HepG2 (cell line): ENCODE measurements at regions of chr1 and their contacts with region 1.

Region 1: DNA sequence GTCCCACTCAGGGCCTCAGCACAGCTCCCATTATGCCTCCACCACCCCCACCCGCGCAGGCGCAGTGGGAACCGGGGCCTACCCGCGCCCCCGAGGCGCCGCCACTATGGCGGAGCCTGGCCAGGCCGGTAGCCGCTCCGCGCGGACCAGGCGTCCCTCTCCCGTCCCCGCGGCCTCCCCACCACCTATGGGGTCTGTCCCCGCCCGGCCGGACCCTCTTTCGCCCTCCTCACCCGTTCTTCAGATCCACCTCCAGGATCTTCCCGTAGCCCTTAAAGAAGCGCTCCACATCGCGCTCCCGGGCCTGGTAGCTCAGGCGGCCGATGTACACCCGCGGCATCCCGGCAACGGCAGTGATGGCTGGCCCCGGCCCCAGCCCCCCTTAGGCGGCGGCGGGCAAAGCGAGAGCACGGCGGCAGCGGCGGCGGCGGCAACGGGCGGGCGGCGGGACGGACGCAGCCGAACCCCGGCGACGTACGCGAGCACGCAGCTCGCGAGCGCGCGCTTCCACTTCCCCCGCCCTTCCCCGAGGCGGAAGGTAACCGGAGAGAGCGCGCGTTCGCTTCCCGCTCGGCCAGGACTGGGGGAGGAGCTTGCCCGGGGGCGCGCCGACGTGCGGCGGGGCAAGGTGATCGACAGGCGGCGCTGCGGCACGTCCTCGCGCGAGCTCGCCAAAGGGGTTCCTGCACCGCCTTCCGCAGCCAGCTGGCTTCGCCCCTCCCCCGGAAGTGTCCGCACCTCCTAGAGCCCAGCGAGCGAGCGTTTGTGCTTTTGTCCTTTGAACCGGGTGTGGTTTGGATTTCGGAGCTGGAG is at the start of gene SRSF4:
- DNase-seq: peak; percentile 97
- ATAC-seq: peak; percentile 87
- H3K4me3 ChIP-seq: peak within 1 kb of the TSS; percentile 90 to 99 (median 98)
- H3K27ac ChIP-seq: peak within 1 kb of the TSS; percentile 99
- H3K4me1 ChIP-seq: peaks cover 65% of the 10 kb centered on the region
- H3K27me3 ChIP-seq: no peaks in the 10 kb centered on the region; a peak in 1 of 5 replicates
- CTCF ChIP-seq: peak; percentile 99
- EP300 ChIP-seq: peak in 1 of 2 experiments; percentile 55; a peak in 2 of 4 replicates
- POLR2A ChIP-seq: peak; percentile 72 to 84
- RAD21 ChIP-seq: peak; percentile 88
- total RNA-seq, gene SRSF4: 43.3 and 50.9 TPM in 2 replicates

Region 2: DNA sequence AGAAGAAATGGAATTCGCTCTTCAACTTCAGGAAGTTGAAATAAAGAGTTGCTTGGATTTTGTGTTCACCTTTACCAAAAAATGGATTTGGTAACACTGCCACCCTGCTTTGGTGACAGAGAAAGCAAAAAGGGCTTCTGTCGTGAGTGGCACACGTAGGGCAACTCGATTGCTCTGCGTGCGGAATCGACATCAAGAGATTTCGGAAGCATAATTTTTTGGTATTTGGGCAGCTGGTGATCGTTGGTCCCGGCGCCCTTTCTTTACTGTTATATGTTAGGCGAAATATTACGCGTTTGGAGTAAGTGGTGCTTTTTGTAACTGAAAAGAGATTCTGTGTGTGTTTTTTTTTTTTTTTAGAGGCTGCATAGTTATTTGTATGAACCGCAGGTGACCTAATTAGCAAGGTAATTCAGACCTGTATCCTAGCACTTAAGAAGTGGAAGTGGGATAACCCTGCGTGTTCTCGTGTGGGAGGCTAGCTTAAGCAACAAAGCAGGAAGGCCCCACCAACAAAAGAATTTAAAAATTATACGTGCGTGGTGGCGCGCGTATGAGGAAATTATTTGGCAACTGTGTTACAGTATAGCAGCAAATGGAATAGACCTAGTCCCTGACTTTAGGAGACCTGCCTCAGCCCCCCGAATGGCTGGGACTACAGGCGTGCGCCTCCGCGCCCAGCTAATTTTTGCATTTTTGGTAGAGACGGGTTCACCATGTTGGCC is 533.0 kb before region 1 on chr1 and contains the start of gene RNU11:
- CTCF ChIA-PET with region 1: no interaction called
- POLR2A ChIA-PET with region 1: interaction called, 16 read pairs
- in situ Hi-C with region 1: no loop called
- intact Hi-C with region 1: loop called (anchors 10 kb)
- DNase-seq: peak; percentile 95
- ATAC-seq: peak; percentile 81
- H3K4me3 ChIP-seq: peak within 1 kb of the TSS; percentile 56 to 81 (median 68)
- H3K27ac ChIP-seq: peak within 1 kb of the TSS; percentile 100
- H3K4me1 ChIP-seq: peaks cover 56% of the 10 kb centered on the region
- H3K27me3 ChIP-seq: no peaks in the 10 kb centered on the region
- CTCF ChIP-seq: no peak; the same call in none of the 2 replicates
- EP300 ChIP-seq: peak in 1 of 2 experiments; percentile 77; a peak in 3 of 4 replicates
- POLR2A ChIP-seq: peak; percentile 99 to 100
- RAD21 ChIP-seq: peak; percentile 43
- total RNA-seq, gene RNU11: not detected in 2 replicates

Region 3: GRCh38 chr1:28886731-28887418 is 294.7 kb before region 1 on chr1:
- CTCF ChIA-PET with region 1: no interaction called
- POLR2A ChIA-PET with region 1: interaction called, 12 read pairs
- in situ Hi-C with region 1: no loop called
- intact Hi-C with region 1: loop called (anchors 5 kb)
- DNase-seq: peak; percentile 80
- ATAC-seq: peak; percentile 84
- H3K4me3 ChIP-seq: peak overlapping the region; percentile 97 to 100 (median 98)
- H3K27ac ChIP-seq: peak overlapping the region; percentile 66
- H3K4me1 ChIP-seq: peaks cover 48% of the 10 kb centered on the region
- H3K27me3 ChIP-seq: no peaks in the 10 kb centered on the region; a peak in 1 of 5 replicates
- CTCF ChIP-seq: no peak
- EP300 ChIP-seq: no peak
- POLR2A ChIP-seq: peak; percentile 39 to 49; a peak in 2 of 4 replicates
- RAD21 ChIP-seq: no peak

Region 4: DNA sequence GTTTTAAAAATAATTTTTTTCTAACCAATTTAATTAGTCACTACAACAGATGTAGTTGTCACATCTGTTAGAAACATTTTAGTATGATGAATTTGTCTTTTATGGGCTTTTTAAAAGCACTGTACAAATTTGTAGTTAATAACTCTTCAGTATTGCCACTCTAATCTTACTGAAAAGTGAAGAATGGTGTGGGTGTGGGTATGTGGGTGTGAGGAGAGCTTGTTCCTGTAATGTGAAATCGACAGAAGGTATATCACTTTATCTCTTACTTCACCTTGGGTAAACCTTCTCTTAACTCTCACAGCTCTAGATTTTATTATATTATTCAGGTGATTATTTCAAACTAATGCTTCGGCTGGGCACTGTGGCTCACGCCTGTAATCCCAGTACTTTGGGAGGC is 100.4 kb before region 1 on chr1:
- CTCF ChIA-PET with region 1: no interaction called
- POLR2A ChIA-PET with region 1: no interaction called
- in situ Hi-C with region 1: no loop called
- intact Hi-C with region 1: no loop called
- DNase-seq: no peak
- ATAC-seq: no peak
- H3K4me3 ChIP-seq: no peak overlapping the region
- H3K27ac ChIP-seq: no peak overlapping the region
- H3K4me1 ChIP-seq: no peaks in the 10 kb centered on the region
- H3K27me3 ChIP-seq: no peaks in the 10 kb centered on the region
- CTCF ChIP-seq: no peak
- EP300 ChIP-seq: no peak
- POLR2A ChIP-seq: no peak
- RAD21 ChIP-seq: no peak

Region 5: DNA sequence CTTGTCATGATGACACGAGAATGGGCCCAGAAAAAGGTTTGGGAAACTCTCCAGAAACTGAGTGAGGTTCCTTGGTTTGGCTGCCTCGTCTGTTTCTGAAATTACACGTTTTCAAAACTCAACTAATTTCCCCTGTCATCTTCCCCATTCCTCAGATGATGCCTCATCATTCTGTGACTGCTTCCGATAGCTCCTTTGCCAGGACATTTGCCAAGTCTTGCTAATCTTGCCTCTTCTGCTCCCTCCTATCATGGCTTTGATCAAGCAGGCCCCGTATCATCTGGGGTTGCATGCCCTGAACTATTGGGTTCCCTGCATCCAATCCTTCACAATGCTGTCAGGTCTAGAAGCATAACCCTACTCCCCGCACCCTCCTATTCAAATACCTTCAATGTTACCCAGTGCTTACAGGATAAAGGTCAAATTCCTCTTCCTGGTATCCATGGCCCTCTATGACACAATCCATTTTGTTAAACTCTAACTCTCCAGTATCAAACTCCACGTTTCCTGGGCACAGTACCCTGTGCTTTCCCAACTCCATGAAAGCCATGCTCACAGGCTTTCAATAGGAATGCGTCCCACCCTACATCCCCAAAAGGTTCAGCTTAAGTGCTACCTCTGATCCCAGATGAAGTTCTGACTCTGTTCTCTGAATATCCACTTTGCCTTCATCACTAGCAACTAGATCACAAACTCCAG is 35.7 kb before region 1 on chr1:
- CTCF ChIA-PET with region 1: no interaction called
- POLR2A ChIA-PET with region 1: interaction called, 13 read pairs
- in situ Hi-C with region 1: no loop called
- intact Hi-C with region 1: no loop called
- DNase-seq: peak; percentile 92
- ATAC-seq: peak; percentile 96
- H3K4me3 ChIP-seq: no peak overlapping the region
- H3K27ac ChIP-seq: peak overlapping the region; percentile 82
- H3K4me1 ChIP-seq: peaks cover 32% of the 10 kb centered on the region
- H3K27me3 ChIP-seq: no peaks in the 10 kb centered on the region
- CTCF ChIP-seq: 0 out of 2 replicates have a peak, but pooled peaks have one; percentile 8
- EP300 ChIP-seq: peak; percentile 61 to 78; a peak in 3 of 4 replicates
- POLR2A ChIP-seq: peak in 1 of 2 experiments; percentile 45; a peak in 1 of 4 replicates
- RAD21 ChIP-seq: no peak

Region 6: GRCh38 chr1:29192220-29192619 is 10.6 kb after region 1 on chr1:
- CTCF ChIA-PET with region 1: no interaction called
- POLR2A ChIA-PET with region 1: interaction called, 30 read pairs
- in situ Hi-C with region 1: no loop called
- intact Hi-C with region 1: no loop called
- DNase-seq: no peak
- ATAC-seq: no peak
- H3K4me3 ChIP-seq: no peak overlapping the region
- H3K27ac ChIP-seq: no peak overlapping the region
- H3K4me1 ChIP-seq: peaks cover 15% of the 10 kb centered on the region
- H3K27me3 ChIP-seq: no peaks in the 10 kb centered on the region
- CTCF ChIP-seq: no peak
- EP300 ChIP-seq: no peak
- POLR2A ChIP-seq: no peak
- RAD21 ChIP-seq: no peak

Region 7: DNA sequence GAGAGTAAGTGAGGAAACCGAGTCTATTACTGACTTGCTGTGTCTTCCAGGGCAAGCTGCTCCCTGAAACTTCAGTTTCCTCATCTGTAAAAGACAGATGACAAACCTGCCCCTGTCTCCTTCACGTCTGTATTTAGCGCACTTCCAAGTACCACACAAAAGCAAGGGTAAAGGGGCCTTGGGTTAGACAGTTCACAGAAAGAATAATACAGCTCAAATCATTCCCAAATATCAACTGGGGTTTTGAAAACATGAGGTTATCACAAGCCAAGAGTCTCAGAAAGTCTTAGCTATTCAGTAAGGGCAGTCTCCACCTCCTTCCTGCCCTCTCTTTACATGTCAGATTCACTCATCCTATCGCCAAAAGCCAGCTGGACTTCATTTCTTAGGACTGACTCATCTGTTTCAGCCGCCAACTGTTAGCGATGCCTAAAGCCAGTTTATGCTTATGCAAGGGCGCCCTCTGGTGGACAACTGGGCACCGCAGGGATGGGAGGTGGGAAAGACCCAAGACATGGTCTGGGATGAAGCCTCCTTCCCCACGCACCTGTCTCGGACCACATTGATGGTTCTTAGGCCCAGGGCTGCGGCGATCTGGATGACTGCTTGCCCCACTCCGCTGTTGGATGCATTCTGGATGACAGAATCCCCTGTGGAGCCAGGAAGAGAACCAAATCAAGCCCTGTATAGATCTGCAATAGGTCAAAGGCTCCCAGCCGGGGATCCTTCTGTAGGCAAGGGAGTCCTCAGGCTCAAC is 21.1 kb after region 1 on chr1:
- CTCF ChIA-PET with region 1: no interaction called
- POLR2A ChIA-PET with region 1: interaction called, 30 read pairs
- in situ Hi-C with region 1: no loop called
- intact Hi-C with region 1: no loop called
- DNase-seq: peak; percentile 89
- ATAC-seq: peak; percentile 97
- H3K4me3 ChIP-seq: no peak overlapping the region
- H3K27ac ChIP-seq: no peak overlapping the region
- H3K4me1 ChIP-seq: peaks cover 6% of the 10 kb centered on the region
- H3K27me3 ChIP-seq: no peaks in the 10 kb centered on the region
- CTCF ChIP-seq: peak; percentile 99
- EP300 ChIP-seq: no peak
- POLR2A ChIP-seq: no peak
- RAD21 ChIP-seq: peak; percentile 95